Activated CD4-positive, alpha-beta T cell treated with anti-CD3 and anti-CD28 coated beads, Interleukin-2, amount 10 ng/mL, durations not matched to agents 24 days and 14 days (primary cell): ENCODE measurements at regions of chr3 and their contacts with region 1.

Region 1: GRCh38 chr3:30611613-30612436 is 5.4 kb downstream of the TGFBR2 start:
- DNase-seq: peak; percentile 74
- H3K4me3 Mint-ChIP-seq: peak overlapping the region; percentile 90
- H3K27ac Mint-ChIP-seq: peak overlapping the region; percentile 86
- H3K4me1 Mint-ChIP-seq: peaks cover 67% of the 10 kb centered on the region
- H3K27me3 Mint-ChIP-seq: no peaks in the 10 kb centered on the region

Region 2: GRCh38 chr3:30227571-30228301 is 384.1 kb before region 1 on chr3:
- intact Hi-C with region 1: loop called (anchors 10 kb)
- DNase-seq: no peak
- H3K4me3 Mint-ChIP-seq: peak overlapping the region; percentile 59
- H3K27ac Mint-ChIP-seq: peak overlapping the region; percentile 66
- H3K4me1 Mint-ChIP-seq: peaks cover 28% of the 10 kb centered on the region
- H3K27me3 Mint-ChIP-seq: no peaks in the 10 kb centered on the region

Region 3: GRCh38 chr3:30623351-30623750 is 11.5 kb after region 1 on chr3:
- intact Hi-C with region 1: loop called (anchors 1 kb)
- DNase-seq: peak; percentile 58
- H3K4me3 Mint-ChIP-seq: peak overlapping the region; percentile 77
- H3K27ac Mint-ChIP-seq: peak overlapping the region; percentile 94
- H3K4me1 Mint-ChIP-seq: peaks cover 78% of the 10 kb centered on the region
- H3K27me3 Mint-ChIP-seq: no peaks in the 10 kb centered on the region

Region 4: GRCh38 chr3:30628901-30629590 is 17.2 kb after region 1 on chr3:
- intact Hi-C with region 1: loop called (anchors 2 kb)
- DNase-seq: peak; percentile 80
- H3K4me3 Mint-ChIP-seq: peak overlapping the region; percentile 57
- H3K27ac Mint-ChIP-seq: peak overlapping the region; percentile 99
- H3K4me1 Mint-ChIP-seq: peaks cover 76% of the 10 kb centered on the region
- H3K27me3 Mint-ChIP-seq: no peaks in the 10 kb centered on the region